ENCODE measurements at regions of chr4 and their contacts with region 1.

Region 1: DNA sequence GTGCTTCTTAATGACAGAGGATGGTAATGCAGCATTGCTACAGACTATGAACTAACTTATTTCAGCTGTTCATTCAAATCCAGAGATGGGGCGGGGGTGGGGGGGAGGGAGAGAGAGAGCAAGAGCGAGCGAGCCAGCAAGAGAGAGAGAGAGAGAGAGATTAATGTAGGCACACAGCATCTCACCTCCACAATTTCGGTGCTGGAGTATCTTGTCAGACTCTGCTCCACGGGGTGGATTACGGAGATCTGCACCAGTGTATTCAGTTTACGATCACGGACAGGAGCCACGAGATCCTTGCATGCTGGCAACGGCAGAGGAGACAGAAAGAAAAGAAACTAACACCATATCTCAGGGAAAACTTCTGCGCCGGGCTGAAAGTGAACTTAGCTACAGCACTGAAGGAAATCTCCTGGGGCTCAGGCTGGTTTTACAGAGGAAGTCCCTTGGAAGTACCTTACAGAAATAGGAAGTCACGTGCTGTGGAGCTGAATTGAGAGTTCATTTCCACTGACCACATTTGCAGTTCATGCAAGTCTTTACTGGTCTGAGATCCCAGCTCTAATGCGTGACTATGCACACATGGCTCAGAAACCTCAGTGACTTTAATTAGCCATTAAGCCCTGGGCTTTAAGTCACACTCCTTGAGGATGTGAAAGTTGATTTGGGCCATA is 440.9 kb downstream of the INPP4B start:
- DNase-seq: peak; percentile 51
- H3K4me3 Mint-ChIP-seq: peak overlapping the region; percentile 97
- H3K27ac Mint-ChIP-seq: peak overlapping the region; percentile 99
- H3K4me1 Mint-ChIP-seq: peaks cover 78% of the 10 kb centered on the region
- H3K27me3 Mint-ChIP-seq: no peaks in the 10 kb centered on the region

Region 2: DNA sequence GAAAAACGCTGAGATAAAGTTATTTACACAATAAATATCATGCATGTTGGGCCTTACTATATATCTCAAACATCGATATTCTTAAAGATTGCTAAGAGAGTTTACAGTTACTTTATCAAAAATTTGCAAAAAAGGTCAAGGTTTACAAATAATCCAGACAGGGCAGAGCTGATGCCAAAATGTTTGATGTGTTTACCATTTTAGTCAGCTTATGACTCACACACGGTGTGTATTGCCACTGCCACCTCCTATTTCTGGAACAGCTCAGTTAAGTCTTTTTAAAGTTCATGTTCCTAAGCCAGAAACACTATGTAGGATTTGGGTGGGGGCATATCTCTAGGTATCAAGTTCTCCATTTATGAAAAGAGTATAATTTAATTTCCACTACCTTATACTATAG is 139.6 kb before region 1 on chr4:
- intact Hi-C with region 1: loop called (anchors 5 kb)
- DNase-seq: no peak
- H3K4me3 Mint-ChIP-seq: no peak overlapping the region
- H3K27ac Mint-ChIP-seq: peak overlapping the region; percentile 25
- H3K4me1 Mint-ChIP-seq: peaks cover 44% of the 10 kb centered on the region
- H3K27me3 Mint-ChIP-seq: no peaks in the 10 kb centered on the region

Region 3: GRCh38 chr4:142353149-142353738 is 51.9 kb before region 1 on chr4:
- intact Hi-C with region 1: loop called (anchors 1 kb)
- DNase-seq: no peak
- H3K4me3 Mint-ChIP-seq: peak overlapping the region; percentile 42
- H3K27ac Mint-ChIP-seq: no peak overlapping the region
- H3K4me1 Mint-ChIP-seq: peaks cover 78% of the 10 kb centered on the region
- H3K27me3 Mint-ChIP-seq: no peaks in the 10 kb centered on the region

Region 4: DNA sequence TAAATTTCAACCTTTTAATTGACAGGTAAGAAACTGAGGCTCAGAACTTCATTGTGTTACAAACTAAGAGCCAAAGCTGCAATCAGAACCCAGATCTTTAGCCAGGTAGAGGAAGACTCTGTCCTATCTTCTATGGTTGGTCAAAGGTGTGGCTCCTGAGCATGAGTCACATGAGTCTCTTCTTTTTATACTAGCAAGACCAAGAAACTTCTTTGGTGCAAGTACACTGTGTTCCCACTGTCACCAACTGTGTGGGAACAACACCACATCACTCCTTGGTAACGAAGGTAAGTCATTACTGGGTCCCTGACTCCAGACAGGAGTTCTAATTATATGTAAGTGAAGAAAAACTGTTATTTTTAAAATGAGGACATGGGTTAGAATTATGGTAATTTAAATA is 150.9 kb after region 1 on chr4:
- intact Hi-C with region 1: loop called (anchors 1 kb)
- DNase-seq: no peak
- H3K4me3 Mint-ChIP-seq: peak overlapping the region; percentile 58
- H3K27ac Mint-ChIP-seq: peak overlapping the region; percentile 70
- H3K4me1 Mint-ChIP-seq: peaks cover 44% of the 10 kb centered on the region
- H3K27me3 Mint-ChIP-seq: no peaks in the 10 kb centered on the region

Region 5: GRCh38 chr4:143184217-143185116 is 779.3 kb after region 1 on chr4 and contains the start of gene USP38:
- intact Hi-C with region 1: loop called (anchors 5 kb)
- DNase-seq: peak; percentile 80
- H3K4me3 Mint-ChIP-seq: peak within 1 kb of the TSS; percentile 92
- H3K27ac Mint-ChIP-seq: peak within 1 kb of the TSS; percentile 98
- H3K4me1 Mint-ChIP-seq: peaks cover 62% of the 10 kb centered on the region
- H3K27me3 Mint-ChIP-seq: no peaks in the 10 kb centered on the region
- total RNA-seq, gene USP38: 29.8 and 32.0 TPM in 2 replicates